Left colon (tissue), 2 donors: ENCODE measurements at regions of chr3 and their contacts with region 1.

Region 1: GRCh38 chr3:69784954-69785514 is 45.8 kb downstream of the MITF start:
- DNase-seq: peak; percentile 20 to 67
- ATAC-seq: no peak

Region 2: DNA sequence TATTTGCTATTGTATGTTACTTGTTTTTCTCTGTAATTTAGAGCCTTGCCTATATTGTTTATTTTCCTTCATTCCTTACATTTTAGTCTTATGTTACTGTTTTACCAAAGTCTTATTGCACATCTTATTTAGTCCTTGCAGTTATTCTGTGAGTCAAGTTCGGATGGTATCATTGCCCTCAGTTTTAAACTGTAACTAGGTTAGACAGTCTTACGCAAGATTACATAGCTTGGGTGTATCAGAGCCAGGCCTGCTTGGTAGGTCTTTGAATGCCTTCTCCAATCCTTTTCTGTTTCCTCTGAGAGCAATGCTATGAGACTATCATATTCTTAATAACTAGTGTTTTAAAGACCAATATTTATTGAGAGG is 156.8 kb after region 1 on chr3:
- intact Hi-C with region 1: loop called in 1 of 2 experiments (anchors 5 kb)
- DNase-seq: no peak
- ATAC-seq: no peak